MCF 10A (cell line): ENCODE measurements at regions of chr17 and their contacts with region 1.

Region 1: DNA sequence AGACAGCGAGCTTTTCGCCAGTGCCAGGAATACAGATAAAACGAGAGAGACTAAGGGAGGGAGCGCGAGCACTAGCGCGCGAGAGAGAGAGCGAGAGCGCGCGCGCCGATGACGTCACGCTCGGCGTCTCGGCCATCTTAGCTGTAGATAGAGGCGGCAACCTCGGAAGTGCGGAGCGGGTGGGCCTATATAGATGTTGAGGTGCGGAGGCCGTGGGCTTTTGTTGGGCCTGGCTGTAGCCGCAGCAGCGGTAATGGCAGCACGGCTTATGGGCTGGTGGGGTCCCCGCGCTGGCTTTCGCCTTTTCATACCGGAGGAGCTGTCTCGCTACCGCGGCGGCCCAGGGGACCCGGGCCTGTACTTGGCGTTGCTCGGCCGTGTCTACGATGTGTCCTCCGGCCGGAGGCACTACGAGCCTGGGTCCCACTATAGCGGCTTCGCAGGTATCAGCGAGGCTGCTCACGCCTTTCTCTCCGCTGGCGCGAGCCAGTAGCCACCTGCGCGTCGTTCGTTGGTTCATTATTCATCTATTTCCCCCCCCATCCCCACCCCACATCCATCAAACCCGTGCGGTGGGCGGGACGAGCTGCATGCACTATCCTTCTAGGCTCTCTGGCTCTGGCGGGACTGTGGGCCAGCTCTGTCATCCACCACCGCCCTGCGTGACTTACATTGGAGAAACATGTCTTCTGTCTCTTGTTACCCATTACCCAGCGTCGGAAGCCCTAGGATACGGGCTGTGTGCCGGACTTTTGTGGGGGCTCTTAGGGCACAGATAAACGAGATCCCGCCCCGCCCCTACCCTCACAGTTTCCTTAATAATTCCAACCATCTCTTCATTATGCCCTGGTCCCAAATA is 795 bp downstream of the CYB5D2 start:
- DNase-seq: peak; percentile 90
- H3K4me3 Mint-ChIP-seq: peak overlapping the region; percentile 98
- H3K27ac Mint-ChIP-seq: peak overlapping the region; percentile 100
- H3K4me1 Mint-ChIP-seq: peaks cover 20% of the 10 kb centered on the region
- H3K27me3 Mint-ChIP-seq: no peaks in the 10 kb centered on the region
- CTCF ChIP-seq: no peak

Region 2: DNA sequence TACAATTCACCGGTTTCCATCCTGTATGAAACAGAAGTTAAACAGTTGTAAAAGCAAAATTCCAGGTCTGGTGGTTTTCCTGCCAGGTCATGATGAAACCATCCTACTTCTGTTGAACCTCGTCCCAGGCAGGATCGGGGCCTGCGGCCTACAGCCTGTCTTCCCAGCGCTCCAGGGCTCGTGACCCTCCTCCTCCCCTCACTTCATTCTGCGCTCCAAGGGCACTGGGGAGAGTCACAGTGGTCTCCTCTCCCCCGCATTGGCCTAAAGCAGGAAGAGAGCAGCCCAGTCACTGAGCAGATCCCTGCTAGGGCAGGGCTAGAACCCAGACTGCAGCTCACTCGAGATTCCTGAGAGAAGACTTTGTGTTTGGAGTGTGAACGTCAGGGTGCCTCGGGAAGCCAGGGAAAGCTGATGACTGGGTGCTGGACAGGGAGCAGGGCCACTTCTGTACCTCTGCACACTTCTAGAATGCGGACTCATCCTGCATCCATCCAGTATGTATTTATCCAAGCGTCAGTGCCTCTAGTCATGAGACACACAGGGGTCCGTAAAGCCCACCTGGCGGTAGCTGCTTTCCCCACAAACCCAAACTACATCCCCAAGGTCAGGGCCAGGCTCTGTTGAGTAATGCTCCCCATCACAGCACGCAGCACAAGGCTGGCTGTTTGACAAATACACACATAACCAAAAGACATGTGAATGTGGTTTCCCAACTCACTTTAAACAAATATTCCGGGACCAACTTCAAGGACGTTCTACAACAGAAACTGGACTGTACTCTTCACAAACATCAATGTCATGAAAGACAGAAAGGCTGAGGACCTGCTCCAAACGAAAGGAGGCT is 341.1 kb before region 1 on chr17:
- CTCF ChIA-PET with region 1: no interaction called
- POLR2A ChIA-PET with region 1: no interaction called
- intact Hi-C with region 1: no loop called
- DNase-seq: no peak
- H3K4me3 Mint-ChIP-seq: no peak overlapping the region
- H3K27ac Mint-ChIP-seq: no peak overlapping the region
- H3K4me1 Mint-ChIP-seq: no peaks in the 10 kb centered on the region
- H3K27me3 Mint-ChIP-seq: no peaks in the 10 kb centered on the region
- CTCF ChIP-seq: no peak

Region 3: DNA sequence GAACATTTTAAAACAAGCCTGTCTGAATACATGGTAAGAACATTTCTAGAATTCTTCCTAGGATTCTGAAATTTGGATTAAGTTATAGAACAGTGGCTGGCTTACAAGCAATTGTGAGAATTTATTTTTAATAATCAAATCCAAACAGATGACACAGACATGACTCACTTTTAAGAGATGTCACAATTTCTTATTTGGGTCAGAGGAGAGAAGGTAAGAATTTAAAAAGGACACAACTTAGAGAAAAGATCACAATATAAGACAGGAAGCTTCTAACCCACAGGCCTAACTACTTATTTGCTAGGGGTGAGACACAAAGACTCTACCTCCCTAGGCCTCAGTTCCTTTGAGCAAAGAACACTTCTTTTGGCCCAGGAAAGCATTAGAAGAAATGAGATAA is 33.6 kb before region 1 on chr17:
- CTCF ChIA-PET with region 1: no interaction called
- POLR2A ChIA-PET with region 1: interaction called, 10 read pairs
- intact Hi-C with region 1: no loop called
- DNase-seq: peak; percentile 38
- H3K4me3 Mint-ChIP-seq: peak overlapping the region; percentile 4
- H3K27ac Mint-ChIP-seq: peak overlapping the region; percentile 79
- H3K4me1 Mint-ChIP-seq: peaks cover 17% of the 10 kb centered on the region
- H3K27me3 Mint-ChIP-seq: no peaks in the 10 kb centered on the region
- CTCF ChIP-seq: no peak

Region 4: GRCh38 chr17:4161179-4161559 is 17.4 kb after region 1 on chr17:
- CTCF ChIA-PET with region 1: interaction called, 11 read pairs
- POLR2A ChIA-PET with region 1: interaction called, 555 read pairs
- intact Hi-C with region 1: loop called (anchors 1 kb)
- DNase-seq: peak; percentile 96
- H3K4me3 Mint-ChIP-seq: peak overlapping the region; percentile 59
- H3K27ac Mint-ChIP-seq: peak overlapping the region; percentile 98
- H3K4me1 Mint-ChIP-seq: peaks cover 54% of the 10 kb centered on the region
- H3K27me3 Mint-ChIP-seq: no peaks in the 10 kb centered on the region
- CTCF ChIP-seq: peak; percentile 13

Region 5: DNA sequence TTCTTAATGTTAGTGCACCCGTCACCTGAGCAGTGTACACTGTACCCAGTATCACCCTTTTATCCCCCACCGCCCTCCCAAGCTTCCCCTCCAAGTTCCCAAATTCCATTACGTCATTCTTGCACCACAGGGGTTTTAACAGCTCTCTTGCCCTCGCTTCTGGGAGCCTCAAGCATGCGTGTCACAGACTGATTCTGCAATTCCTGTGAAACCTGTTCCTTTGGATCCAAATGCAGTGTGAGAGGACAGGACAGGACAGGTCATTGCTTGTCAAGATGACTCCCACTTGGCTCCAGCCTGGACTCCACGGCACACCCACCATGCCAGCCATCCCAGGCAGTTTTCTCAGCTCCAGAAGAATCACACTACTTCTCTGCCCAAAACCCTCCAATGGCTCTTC is 43.3 kb after region 1 on chr17:
- CTCF ChIA-PET with region 1: no interaction called
- POLR2A ChIA-PET with region 1: interaction called, 23 read pairs
- intact Hi-C with region 1: loop called (anchors 2 kb)
- DNase-seq: peak; percentile 86
- H3K4me3 Mint-ChIP-seq: no peak overlapping the region
- H3K27ac Mint-ChIP-seq: no peak overlapping the region
- H3K4me1 Mint-ChIP-seq: peaks cover 11% of the 10 kb centered on the region
- H3K27me3 Mint-ChIP-seq: no peaks in the 10 kb centered on the region
- CTCF ChIP-seq: no peak

Region 6: DNA sequence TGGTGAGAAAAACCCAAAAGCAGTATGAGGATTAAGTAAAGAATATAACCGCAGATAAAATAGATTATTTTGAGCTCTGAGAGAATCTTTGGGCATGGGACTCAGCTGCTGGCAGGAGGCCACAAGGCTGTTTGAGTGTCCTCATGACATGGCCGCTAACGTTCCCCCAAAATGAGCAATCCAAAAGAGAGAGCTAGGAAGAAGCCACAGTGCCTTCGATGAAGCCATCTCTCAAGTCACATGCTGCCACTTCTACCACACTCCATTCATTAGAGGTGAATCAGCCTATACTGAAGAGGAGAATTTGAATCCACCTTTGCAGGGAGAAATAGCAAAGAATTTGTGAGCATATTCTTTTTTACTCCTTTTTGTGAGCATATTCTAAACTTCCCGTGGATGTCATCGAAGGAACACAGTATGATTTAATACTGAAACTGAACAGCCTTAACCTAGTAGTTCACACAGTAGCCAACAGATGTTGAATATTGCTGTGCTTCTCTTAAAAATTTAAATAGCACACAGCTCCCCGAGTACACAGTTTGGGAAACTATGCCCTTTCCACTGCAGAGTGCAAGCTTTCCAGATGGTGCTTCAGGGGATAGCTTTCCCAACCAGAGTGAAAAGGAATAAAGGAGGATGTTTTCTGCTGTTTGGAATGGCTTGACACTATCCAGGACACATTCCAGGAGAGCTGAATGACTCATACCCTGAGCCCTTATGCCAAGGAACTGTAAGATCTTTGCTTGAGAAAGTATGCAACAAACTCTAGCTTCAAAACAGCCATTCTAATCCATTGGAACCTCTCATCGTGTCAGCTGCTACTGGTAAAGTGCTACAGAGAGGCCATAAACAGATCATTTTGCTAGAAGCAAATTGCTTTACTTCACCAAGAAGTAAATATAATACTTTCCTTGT is 86.1 kb after region 1 on chr17:
- CTCF ChIA-PET with region 1: no interaction called
- POLR2A ChIA-PET with region 1: interaction called, 13 read pairs
- intact Hi-C with region 1: no loop called
- DNase-seq: peak; percentile 90
- H3K4me3 Mint-ChIP-seq: peak overlapping the region; percentile 63
- H3K27ac Mint-ChIP-seq: peak overlapping the region; percentile 64
- H3K4me1 Mint-ChIP-seq: peaks cover 32% of the 10 kb centered on the region
- H3K27me3 Mint-ChIP-seq: no peaks in the 10 kb centered on the region
- CTCF ChIP-seq: no peak

Region 7: GRCh38 chr17:4366327-4367063 is 222.7 kb after region 1 on chr17 and contains the start of gene UBE2G1:
- CTCF ChIA-PET with region 1: no interaction called
- POLR2A ChIA-PET with region 1: interaction called, 8 read pairs
- intact Hi-C with region 1: loop called (anchors 5 kb)
- DNase-seq: peak; percentile 95
- H3K4me3 Mint-ChIP-seq: peak within 1 kb of the TSS; percentile 80
- H3K27ac Mint-ChIP-seq: peak within 1 kb of the TSS; percentile 87
- H3K4me1 Mint-ChIP-seq: peaks cover 12% of the 10 kb centered on the region
- H3K27me3 Mint-ChIP-seq: no peaks in the 10 kb centered on the region
- CTCF ChIP-seq: peak; percentile 31
- total RNA-seq, gene UBE2G1: 65.1 and 78.5 TPM in 2 replicates